IMR-90 (cell line): ENCODE measurements at regions of chr6 and their contacts with region 1.

Region 1: GRCh38 chr6:91337967-91338366 is 751.1 kb upstream of the MAP3K7 start:
- DNase-seq: no peak
- ATAC-seq: no peak
- H3K4me3 ChIP-seq: no peak overlapping the region
- H3K27ac ChIP-seq: no peak overlapping the region
- H3K4me1 ChIP-seq: no peaks in the 10 kb centered on the region
- H3K27me3 ChIP-seq: no peaks in the 10 kb centered on the region; the same call in 1 of the 2 replicates
- CTCF ChIP-seq: no peak
- POLR2A ChIP-seq: no peak
- RAD21 ChIP-seq: no peak

Region 2: DNA sequence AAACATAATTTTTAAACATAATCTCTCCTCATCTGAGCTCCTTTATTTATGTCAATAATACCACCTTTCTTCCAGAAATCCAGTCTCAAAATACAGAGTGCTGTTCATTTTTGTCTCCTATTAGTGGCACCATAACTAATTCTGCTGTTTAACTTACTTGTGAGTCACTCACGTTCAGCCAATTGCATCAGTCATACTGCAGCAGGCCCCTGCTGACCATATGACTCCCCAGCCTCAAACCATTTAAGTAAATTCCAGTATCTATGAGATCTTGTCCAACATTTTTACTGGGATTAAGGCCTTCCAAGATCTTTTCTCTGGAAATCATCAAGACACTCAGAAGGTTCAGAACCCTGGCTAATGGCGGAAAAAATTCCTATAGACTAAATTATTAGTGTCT is 231.1 kb after region 1 on chr6:
- CTCF ChIA-PET with region 1: no interaction called
- POLR2A ChIA-PET with region 1: no interaction called
- dilution Hi-C with region 1: no loop called
- in situ Hi-C with region 1: no loop called
- intact Hi-C with region 1: loop called (anchors 10 kb)
- DNase-seq: peak; percentile 53
- ATAC-seq: peak; percentile 35; the same call in 1 of the 2 replicates
- H3K4me3 ChIP-seq: no peak overlapping the region
- H3K27ac ChIP-seq: no peak overlapping the region
- H3K4me1 ChIP-seq: no peaks in the 10 kb centered on the region
- H3K27me3 ChIP-seq: no peaks in the 10 kb centered on the region
- CTCF ChIP-seq: no peak
- POLR2A ChIP-seq: no peak
- RAD21 ChIP-seq: no peak

Region 3: GRCh38 chr6:91678679-91679446 is 340.9 kb after region 1 on chr6:
- CTCF ChIA-PET with region 1: no interaction called
- POLR2A ChIA-PET with region 1: no interaction called
- dilution Hi-C with region 1: no loop called
- in situ Hi-C with region 1: no loop called
- intact Hi-C with region 1: loop called (anchors 10 kb)
- DNase-seq: no peak
- ATAC-seq: no peak
- H3K4me3 ChIP-seq: no peak overlapping the region
- H3K27ac ChIP-seq: no peak overlapping the region
- H3K4me1 ChIP-seq: no peaks in the 10 kb centered on the region
- H3K27me3 ChIP-seq: no peaks in the 10 kb centered on the region
- CTCF ChIP-seq: no peak
- POLR2A ChIP-seq: no peak
- RAD21 ChIP-seq: no peak